Right ventricle myocardium superior (tissue), 1 donor: ENCODE measurements at regions of chr19 and their contacts with region 1.

Region 1: DNA sequence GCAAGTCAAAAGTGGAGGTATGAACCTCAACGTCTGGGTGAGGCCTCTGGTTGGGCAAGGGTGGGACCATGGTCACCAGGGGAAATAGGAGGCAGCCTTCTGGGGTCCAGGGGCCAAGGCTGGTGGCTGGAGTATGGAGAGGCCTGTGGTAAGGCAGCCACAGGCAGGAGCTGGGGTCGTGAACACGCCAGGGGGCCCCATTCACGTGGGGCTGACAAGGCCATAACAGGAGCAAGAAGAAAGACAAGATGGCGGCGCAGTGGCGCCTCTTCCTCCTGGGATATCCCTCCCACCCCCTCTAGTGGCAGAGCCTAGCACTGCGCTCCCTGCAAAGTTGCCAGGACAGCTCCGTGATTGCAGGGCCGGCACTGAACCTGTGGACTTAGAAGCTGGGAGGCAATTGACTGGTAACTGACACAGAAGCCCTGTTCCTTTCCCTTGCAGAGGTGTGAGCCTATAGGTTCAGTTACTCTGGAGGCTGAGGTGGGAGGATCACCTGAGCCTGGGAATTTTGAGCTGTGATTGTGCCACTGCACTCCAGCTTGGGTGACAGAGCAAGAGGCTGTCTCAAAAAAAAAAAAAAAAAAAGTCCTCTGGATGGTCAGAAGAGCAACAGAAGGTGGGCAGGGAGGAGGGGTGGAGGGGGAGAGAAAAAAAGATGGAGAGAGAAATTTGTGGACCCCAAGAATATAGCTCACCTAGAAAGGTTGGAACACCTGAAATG is 19.7 kb upstream of the EDDM13 start:
- DNase-seq: peak; percentile 82
- ATAC-seq: peak; percentile 85

Region 2: DNA sequence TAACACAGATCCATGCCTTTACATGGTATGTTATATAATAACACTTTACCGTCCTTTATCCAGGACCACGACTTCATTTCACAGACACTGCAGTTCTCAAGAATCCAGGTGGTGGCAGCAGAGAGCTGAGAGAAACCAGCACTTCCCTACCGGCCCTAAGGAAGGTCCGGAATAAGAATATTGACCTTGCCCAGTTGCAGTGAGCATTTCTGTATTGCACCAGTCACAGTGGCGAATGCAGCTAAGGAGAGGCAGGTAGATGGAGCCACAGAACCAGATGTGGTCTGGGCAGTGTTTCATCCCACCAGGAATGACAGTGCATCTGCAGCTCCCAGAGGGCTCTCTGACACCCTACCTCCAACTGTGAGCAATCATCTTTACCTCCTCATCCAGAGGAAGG is 176.4 kb before region 1 on chr19:
- intact Hi-C with region 1: loop called (anchors 5 kb)
- DNase-seq: no peak
- ATAC-seq: peak; percentile 78

Region 3: GRCh38 chr19:56217039-56217949 is 35.6 kb before region 1 on chr19:
- intact Hi-C with region 1: no loop called
- DNase-seq: peak; percentile 44
- ATAC-seq: peak; percentile 49

Region 4: DNA sequence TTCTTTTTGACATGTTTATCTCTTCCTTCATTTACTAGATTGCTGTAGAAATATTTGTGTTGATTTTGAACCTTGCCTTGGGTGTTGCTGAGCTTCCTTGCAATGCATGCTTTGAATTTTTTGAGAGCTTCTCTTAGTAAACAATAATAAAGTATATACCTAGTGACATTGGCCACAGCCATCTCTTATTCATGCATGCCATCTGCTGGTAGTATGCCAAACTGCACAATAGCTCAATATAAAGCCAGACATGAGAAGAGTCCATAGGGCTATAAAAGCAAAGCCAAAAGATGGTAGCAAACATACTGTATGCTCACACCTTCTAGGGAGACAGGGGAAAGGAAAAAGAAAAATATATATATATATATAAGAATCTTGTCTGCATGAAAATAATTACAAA is 80.6 kb after region 1 on chr19:
- intact Hi-C with region 1: loop called (anchors 5 kb)
- DNase-seq: no peak
- ATAC-seq: peak; percentile 67

Region 5: GRCh38 chr19:56350416-56351045 is 97.7 kb after region 1 on chr19:
- intact Hi-C with region 1: loop called (anchors 5 kb)
- DNase-seq: no peak
- ATAC-seq: peak; percentile 58

Region 6: DNA sequence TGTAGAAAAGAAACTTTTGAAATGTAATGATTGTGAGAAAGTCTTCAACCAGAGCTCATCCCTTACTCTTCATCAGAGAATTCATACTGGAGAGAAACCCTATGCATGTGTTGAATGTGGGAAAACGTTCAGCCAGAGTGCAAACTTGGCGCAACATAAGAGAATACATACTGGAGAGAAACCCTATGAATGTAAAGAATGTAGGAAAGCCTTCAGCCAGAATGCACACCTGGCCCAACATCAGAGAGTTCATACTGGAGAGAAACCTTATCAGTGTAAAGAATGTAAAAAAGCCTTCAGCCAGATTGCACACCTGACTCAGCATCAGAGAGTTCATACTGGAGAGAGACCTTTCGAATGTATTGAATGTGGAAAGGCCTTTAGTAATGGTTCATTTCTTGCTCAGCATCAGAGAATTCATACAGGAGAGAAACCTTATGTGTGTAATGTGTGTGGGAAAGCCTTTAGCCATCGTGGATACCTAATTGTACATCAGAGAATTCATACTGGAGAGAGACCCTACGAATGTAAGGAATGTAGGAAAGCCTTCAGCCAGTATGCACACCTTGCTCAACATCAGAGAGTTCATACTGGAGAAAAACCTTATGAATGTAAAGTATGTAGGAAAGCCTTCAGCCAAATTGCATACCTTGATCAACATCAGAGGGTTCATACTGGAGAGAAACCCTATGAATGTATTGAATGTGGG is 170.6 kb after region 1 on chr19:
- intact Hi-C with region 1: no loop called
- DNase-seq: no peak
- ATAC-seq: no peak